ENCODE measurements at regions of chr1 and their contacts with region 1.

Region 1: GRCh38 chr1:67685067-67685557 is at the start of gene GADD45A:
- DNase-seq: peak; percentile 99
- H3K4me3 Mint-ChIP-seq: peak within 1 kb of the TSS; percentile 91
- H3K27ac Mint-ChIP-seq: peak within 1 kb of the TSS; percentile 96
- H3K4me1 Mint-ChIP-seq: peaks cover 35% of the 10 kb centered on the region
- H3K27me3 Mint-ChIP-seq: no peaks in the 10 kb centered on the region
- total RNA-seq, gene GADD45A: 33.4 and 36.7 TPM in 2 replicates

Region 2: DNA sequence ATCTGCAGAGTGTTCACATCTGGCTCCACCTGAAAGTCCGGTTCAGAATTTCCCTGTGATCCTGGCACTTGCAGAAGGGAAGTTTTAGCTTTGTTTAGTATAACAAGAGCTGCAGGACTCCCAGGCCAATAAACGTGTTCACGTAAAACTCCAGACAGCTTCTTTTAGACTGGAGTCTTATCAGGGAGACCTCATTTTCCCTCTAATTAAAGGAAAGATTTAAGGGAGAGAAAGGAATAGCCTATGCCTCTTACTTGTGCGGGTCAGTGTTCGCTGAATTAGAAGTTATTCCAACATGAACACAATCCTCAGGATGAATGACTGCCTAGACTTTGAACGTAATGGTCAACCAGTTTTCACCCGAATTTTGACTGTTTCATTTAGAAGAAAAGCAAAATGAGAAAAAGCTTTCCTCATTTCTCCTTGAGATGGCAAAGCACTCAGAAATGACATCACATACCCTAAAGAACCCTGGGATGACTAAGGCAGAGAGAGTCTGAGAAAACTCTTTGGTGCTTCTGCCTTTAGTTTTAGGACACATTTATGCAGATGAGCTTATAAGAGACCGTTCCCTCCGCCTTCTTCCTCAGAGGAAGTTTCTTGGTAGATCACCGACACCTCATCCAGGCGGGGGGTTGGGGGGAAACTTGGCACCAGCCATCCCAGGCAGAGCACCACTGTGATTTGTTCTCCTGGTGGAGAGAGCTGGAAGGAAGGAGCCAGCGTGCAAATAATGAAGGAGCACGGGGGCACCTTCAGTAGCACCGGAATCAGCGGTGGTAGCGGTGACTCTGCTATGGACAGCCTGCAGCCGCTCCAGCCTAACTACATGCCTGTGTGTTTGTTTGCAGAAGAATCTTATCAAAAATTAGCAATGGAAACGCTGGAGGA is 1353.2 kb before region 1 on chr1:
- intact Hi-C with region 1: loop called (anchors 10 kb)
- DNase-seq: peak; percentile 82
- H3K4me3 Mint-ChIP-seq: peak overlapping the region; percentile 98
- H3K27ac Mint-ChIP-seq: peak overlapping the region; percentile 97
- H3K4me1 Mint-ChIP-seq: peaks cover 56% of the 10 kb centered on the region
- H3K27me3 Mint-ChIP-seq: no peaks in the 10 kb centered on the region

Region 3: GRCh38 chr1:67174716-67175284 is 510.3 kb before region 1 on chr1:
- intact Hi-C with region 1: loop called (anchors 2 kb)
- DNase-seq: no peak
- H3K4me3 Mint-ChIP-seq: peak overlapping the region; percentile 42
- H3K27ac Mint-ChIP-seq: peak overlapping the region; percentile 95
- H3K4me1 Mint-ChIP-seq: peaks cover 48% of the 10 kb centered on the region
- H3K27me3 Mint-ChIP-seq: no peaks in the 10 kb centered on the region

Region 4: DNA sequence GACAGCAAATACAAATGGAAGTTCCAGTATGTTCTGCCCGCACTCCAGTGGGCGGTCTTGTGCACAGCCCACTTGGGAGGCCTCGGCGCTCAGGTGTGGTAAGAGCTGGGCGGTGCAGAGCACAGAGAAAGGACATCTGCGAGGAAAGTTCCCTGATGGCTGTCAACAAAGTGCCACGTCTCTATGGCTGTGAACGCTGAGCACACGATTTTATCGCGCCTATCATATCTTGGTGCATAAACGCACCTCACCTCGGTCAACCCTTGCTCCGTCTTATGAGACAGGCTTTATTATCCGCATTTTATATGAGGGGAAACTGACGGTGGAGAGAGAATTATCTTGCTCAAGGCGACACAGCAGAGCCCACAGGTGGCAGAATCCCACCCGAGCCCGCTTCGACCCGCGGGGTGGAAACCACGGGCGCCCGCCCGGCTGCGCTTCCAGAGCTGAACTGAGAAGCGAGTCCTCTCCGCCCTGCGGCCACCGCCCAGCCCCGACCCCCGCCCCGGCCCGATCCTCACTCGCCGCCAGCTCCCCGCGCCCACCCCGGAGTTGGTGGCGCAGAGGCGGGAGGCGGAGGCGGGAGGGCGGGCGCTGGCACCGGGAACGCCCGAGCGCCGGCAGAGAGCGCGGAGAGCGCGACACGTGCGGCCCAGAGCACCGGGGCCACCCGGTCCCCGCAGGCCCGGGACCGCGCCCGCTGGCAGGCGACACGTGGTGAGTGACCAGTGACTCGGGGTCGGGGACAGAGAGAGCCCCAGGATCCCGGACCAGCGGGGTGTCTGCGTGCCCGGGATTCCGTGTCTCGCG is 377.7 kb before region 1 on chr1 and contains the start of gene IL12RB2:
- intact Hi-C with region 1: loop called (anchors 10 kb)
- DNase-seq: peak; percentile 93
- H3K4me3 Mint-ChIP-seq: peak within 1 kb of the TSS; percentile 97
- H3K27ac Mint-ChIP-seq: peak within 1 kb of the TSS; percentile 100
- H3K4me1 Mint-ChIP-seq: peaks cover 64% of the 10 kb centered on the region
- H3K27me3 Mint-ChIP-seq: no peaks in the 10 kb centered on the region
- total RNA-seq, gene IL12RB2: 138 and 146 TPM in 2 replicates

Region 5: DNA sequence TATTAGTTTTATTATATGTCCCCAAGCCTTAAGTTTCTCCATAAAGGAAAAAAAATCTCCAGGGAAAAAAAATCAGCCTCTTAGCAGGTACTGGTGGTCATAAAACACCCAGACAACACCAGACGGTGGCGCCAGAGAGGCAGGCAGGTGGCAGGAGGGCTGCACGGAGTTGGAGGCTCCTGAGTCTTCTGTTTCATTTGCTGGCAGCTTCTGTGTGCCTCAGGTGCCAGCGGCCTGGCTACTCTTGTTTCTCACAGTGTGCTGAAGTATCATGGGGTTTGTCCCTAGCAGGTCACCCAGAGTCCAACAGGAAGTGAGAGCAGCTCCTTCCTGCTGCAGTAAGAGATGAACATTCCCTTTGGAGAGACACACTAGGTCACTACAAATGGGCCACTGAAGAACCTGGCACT is 123.4 kb before region 1 on chr1:
- intact Hi-C with region 1: loop called (anchors 1 kb)
- DNase-seq: peak; percentile 94
- H3K4me3 Mint-ChIP-seq: no peak overlapping the region
- H3K27ac Mint-ChIP-seq: no peak overlapping the region
- H3K4me1 Mint-ChIP-seq: peaks cover 6% of the 10 kb centered on the region
- H3K27me3 Mint-ChIP-seq: peaks cover 8% of the 10 kb centered on the region

Region 6: GRCh38 chr1:67735806-67736627 is 50.9 kb after region 1 on chr1:
- intact Hi-C with region 1: loop called (anchors 1 kb)
- DNase-seq: peak; percentile 82
- H3K4me3 Mint-ChIP-seq: peak overlapping the region; percentile 71
- H3K27ac Mint-ChIP-seq: peak overlapping the region; percentile 89
- H3K4me1 Mint-ChIP-seq: peaks cover 23% of the 10 kb centered on the region
- H3K27me3 Mint-ChIP-seq: peaks cover 7% of the 10 kb centered on the region